ENCODE measurements at regions of chr6 and their contacts with region 1.

Region 1: DNA sequence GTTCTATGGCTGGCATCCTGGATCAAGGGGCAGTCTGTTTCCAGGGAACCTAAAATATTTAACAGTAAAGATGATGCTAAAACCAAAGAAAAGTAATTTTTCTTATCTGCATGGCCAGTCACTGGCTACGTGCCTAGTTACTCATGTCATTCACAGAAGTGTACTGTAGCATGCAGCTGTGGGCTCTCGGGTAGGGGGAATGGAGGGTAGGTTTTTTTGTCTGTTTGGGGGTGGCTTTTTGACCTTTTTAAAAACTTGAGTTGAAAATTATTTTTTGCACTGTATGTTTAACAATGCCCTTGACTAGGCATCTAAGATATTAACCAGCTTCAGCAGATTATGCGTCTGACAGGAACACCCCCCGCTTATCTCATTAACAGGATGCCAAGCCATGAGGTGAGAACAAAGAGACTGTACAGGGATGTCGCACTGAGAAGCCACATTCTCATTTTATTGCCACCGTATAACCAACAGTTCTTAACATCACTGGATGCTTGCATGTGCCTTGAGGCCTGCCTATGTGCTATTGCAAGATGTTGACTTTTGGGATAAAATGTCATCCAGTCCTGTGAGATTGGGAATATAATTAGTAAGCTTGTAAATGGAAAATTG is 30.3 kb upstream of the MAPK13 start:
- DNase-seq: no peak
- ATAC-seq: peak in 3 of 4 donors; percentile 13 to 32 (median 25)
- H3K4me3 ChIP-seq: no peak overlapping the region
- H3K27ac ChIP-seq: peak overlapping the region in 1 of 12 donors; percentile 69
- H3K4me1 ChIP-seq: peaks cover 0 to 33% (median 15%) of the 10 kb centered on the region in 12 donors
- H3K27me3 ChIP-seq: no peaks in the 10 kb centered on the region
- CTCF ChIP-seq: no peak
- POLR2A ChIP-seq: no peak

Region 2: GRCh38 chr6:36153972-36154723 is 54.2 kb after region 1 on chr6:
- intact Hi-C with region 1: loop called in 1 of 10 experiments (anchors 2 kb)
- DNase-seq: no peak
- ATAC-seq: no peak
- H3K4me3 ChIP-seq: no peak overlapping the region
- H3K27ac ChIP-seq: no peak overlapping the region
- H3K4me1 ChIP-seq: peaks cover 0 to 11% (median 0%) of the 10 kb centered on the region in 12 donors
- H3K27me3 ChIP-seq: no peaks in the 10 kb centered on the region
- CTCF ChIP-seq: no peak
- POLR2A ChIP-seq: no peak

Region 3: GRCh38 chr6:36526066-36526465 is 426.1 kb after region 1 on chr6:
- intact Hi-C with region 1: no loop called
- DNase-seq: no peak
- ATAC-seq: no peak
- H3K4me3 ChIP-seq: no peak overlapping the region
- H3K27ac ChIP-seq: no peak overlapping the region
- H3K4me1 ChIP-seq: peaks cover 3 to 35% (median 15%) of the 10 kb centered on the region in 12 donors
- H3K27me3 ChIP-seq: no peaks in the 10 kb centered on the region
- CTCF ChIP-seq: no peak
- POLR2A ChIP-seq: no peak

Measured in heart left ventricle (tissue), 16 donors.